G401 (cell line): ENCODE measurements at regions of chr17 and their contacts with region 1.

Region 1: DNA sequence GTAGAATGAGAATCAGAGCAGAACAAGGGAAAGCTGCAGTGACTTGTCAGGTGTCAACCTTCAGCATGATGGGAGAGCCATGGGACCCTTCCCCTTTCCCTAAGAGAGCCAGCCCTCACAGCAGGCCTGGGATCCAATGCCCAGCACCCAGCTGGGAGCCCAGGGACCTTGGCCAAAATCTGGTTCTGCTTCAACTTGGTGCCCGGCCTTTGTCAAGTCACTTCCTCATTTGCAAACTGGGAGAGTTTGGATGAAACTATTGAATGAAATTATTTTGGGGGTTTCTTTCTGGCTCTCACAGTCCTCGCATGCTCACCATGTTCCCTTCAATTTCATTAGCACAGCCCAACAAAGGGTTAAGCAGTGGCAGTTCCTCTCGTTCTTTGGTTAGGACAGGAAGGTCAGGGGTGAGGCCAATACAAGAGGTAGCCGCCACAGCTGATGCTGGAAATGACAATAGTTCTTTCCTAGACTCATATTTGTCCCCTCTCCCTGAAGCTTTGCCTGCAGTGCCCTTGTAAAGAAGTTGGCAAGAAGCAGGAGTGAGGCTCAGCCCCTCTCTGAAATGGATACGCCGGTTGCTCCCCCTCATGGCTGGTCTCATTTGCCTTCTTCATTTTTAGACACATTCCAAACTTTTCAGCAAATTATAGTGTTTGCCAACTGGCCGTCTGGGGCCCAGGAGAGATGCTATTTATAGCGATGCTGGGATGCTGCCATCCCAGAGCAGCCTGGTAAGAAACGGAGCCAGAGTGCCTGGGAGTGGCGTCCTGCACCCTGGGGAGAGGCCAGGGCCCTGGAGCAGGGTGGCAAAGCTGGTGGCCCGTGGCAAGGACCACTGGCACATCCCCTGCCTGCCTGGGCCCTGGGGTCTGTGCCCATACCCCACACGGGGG is 34.5 kb upstream of the MEOX1 start:
- DNase-seq: peak; percentile 40

Region 2: DNA sequence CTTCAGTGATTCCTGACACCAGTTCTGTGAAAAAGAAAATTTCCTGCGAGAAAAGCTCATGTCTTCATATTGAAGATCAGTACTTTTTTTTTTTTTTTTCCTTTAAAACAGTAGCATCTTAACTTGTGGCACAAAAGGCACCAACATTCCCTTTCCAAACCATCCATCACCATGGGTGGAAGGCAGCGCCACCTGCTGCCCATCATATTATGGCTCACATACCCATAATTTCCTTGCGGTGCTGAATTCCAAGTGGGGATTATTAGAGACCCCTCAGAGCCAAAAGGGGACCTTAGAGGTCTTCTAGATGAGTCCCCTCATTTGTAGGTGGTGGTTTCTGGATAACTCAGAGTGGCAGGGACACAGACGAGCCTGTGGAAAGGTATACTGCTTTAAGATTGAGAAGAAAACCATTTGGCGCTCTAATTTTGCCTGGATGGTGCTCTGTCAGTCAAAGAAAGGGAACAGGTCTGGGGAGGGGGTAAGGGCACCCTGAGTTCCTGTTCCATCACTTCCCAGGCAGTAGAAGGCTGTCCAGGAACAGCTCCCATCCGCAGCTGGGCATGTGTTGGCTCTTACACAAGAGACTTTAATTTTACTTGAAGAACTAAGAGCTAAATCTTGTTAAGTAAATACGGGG is 70.3 kb after region 1 on chr17:
- in situ Hi-C with region 1: loop called (anchors 5 kb)
- DNase-seq: peak; percentile 79